Activated naive CD4-positive, alpha-beta T cell treated with anti-CD3 and anti-CD28 coated beads for 36 hours (primary cell): ENCODE measurements at regions of chr5 and their contacts with region 1.

Region 1: DNA sequence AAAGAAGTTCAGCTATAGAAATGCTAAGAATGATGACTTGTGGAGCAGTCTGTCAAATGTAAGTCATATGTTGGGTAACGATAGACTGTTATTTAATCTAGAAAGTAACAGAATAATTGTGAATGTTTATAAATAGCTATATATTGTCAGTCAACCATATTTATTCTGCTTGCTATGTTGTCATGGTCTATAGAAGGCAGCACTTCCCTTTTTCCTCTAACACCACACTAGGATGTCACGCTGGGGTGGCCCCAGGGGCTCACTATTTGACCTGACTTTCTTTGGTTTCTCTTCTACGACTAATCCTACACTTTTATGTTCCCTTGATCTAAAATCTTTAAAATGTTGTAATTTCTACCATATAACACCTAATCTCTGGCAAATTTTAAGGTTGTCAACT is 20.5 kb downstream of the ERAP2 start:
- DNase-seq: peak; percentile 79
- H3K4me3 Mint-ChIP-seq: peak overlapping the region; percentile 79
- H3K27ac Mint-ChIP-seq: peak overlapping the region; percentile 98
- H3K4me1 Mint-ChIP-seq: peaks cover 62% of the 10 kb centered on the region
- H3K27me3 Mint-ChIP-seq: no peaks in the 10 kb centered on the region

Region 2: DNA sequence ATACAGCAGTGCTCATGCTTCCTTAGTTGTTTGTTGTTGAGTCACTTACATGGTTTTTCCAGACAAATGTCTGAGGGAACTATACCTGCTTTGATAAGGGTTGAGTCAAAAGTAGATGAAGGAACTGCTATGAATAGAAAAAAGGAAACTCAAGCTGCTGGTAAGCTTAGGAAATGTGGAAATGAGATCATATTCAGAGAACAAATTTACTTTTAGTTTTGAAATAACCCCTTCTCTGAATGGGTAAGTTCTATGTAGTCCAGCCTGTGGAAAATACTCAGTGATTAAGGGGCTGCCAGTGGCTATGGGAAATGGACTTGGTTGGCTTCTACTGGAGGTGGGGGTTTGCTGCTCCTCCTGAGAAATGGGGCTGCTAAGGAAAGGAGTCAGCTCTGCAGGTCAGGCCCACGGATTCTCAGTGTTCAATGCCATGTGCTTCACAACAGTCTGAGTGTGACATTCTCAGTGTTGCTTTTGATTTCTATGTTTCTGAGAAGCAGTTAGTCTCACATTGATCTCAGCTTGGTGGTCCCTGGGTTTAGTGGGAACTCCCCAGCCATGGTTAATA is 1026.6 kb before region 1 on chr5:
- CTCF ChIA-PET with region 1: no interaction called
- intact Hi-C with region 1: loop called (anchors 1 kb)
- DNase-seq: peak; percentile 65
- H3K4me3 Mint-ChIP-seq: peak overlapping the region; percentile 68
- H3K27ac Mint-ChIP-seq: peak overlapping the region; percentile 99
- H3K4me1 Mint-ChIP-seq: peaks cover 59% of the 10 kb centered on the region
- H3K27me3 Mint-ChIP-seq: no peaks in the 10 kb centered on the region

Region 3: GRCh38 chr5:96807075-96807654 is 89.6 kb before region 1 on chr5:
- CTCF ChIA-PET with region 1: interaction called, 3 read pairs
- intact Hi-C with region 1: loop called (anchors 1 kb)
- DNase-seq: peak; percentile 48
- H3K4me3 Mint-ChIP-seq: peak overlapping the region; percentile 86
- H3K27ac Mint-ChIP-seq: peak overlapping the region; percentile 97
- H3K4me1 Mint-ChIP-seq: peaks cover 80% of the 10 kb centered on the region
- H3K27me3 Mint-ChIP-seq: no peaks in the 10 kb centered on the region

Region 4: DNA sequence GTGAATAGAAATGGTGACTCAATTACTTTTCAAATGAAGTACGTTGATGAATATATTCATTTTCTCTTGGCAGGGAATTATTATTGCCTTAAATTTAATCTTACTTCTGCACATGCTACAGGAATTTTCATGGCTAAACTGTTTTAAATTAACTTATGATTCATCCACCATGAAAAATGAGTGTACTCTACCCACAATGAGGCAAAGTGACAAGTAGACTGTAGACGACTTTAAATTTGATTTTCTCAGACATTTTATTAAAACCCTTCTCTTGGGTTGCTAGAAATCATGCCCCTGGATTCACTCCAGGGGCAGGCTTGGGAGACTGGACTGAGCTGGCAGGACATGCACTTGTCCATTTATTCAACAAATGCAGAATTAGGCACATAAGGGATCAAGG is 44.0 kb before region 1 on chr5:
- CTCF ChIA-PET with region 1: no interaction called
- intact Hi-C with region 1: no loop called
- DNase-seq: no peak
- H3K4me3 Mint-ChIP-seq: no peak overlapping the region
- H3K27ac Mint-ChIP-seq: no peak overlapping the region
- H3K4me1 Mint-ChIP-seq: no peaks in the 10 kb centered on the region
- H3K27me3 Mint-ChIP-seq: no peaks in the 10 kb centered on the region

Region 5: GRCh38 chr5:96876292-96876850 is 20.4 kb before region 1 on chr5 and contains the start of gene ERAP2:
- CTCF ChIA-PET with region 1: interaction called, 7 read pairs
- intact Hi-C with region 1: loop called (anchors 1 kb)
- DNase-seq: no peak
- H3K4me3 Mint-ChIP-seq: peak within 1 kb of the TSS; percentile 90
- H3K27ac Mint-ChIP-seq: peak within 1 kb of the TSS; percentile 95
- H3K4me1 Mint-ChIP-seq: peaks cover 68% of the 10 kb centered on the region
- H3K27me3 Mint-ChIP-seq: no peaks in the 10 kb centered on the region
- total RNA-seq, gene ERAP2: 108 to 111 TPM

Region 6: DNA sequence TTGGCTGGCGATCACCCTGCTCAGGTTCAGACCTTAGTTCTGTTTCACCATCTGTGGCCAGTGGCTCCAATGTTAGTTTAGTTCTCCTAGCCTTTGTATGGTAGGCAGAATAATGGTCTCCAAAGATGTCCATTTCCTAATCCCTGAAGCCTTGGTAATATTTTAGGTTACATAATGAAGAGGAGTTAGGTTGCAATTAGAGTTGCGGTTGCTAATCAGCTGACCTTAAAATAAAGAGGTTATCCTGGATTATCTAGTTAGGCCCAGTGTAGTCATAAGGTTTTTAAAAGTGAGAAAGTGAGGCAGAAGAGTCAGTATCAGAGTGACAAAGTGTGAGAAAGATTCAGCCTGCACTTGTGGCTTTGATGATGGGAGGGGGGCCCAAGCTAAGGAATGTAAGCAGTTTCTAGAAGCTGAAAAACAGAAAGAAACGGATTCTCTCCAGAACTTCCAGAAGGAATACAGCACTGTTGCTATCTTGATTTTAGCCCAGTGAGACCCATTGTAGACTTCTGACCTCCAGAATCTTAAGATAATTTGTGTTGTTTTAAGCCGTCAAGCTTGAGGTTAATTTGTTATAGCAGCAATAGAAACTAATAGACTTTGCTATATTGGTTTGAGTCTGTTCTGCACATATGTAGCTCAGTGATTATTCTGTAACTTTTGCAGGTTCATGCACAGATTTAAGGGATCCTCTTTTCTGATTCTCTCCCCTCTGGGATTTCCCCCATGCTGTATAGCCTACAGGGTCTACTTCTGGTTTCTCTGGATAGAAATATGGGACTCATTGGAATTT is 60.6 kb after region 1 on chr5:
- CTCF ChIA-PET with region 1: interaction called, 3 read pairs
- intact Hi-C with region 1: loop called (anchors 1 kb)
- DNase-seq: peak; percentile 73
- H3K4me3 Mint-ChIP-seq: peak overlapping the region; percentile 64
- H3K27ac Mint-ChIP-seq: peak overlapping the region; percentile 86
- H3K4me1 Mint-ChIP-seq: peaks cover 77% of the 10 kb centered on the region
- H3K27me3 Mint-ChIP-seq: no peaks in the 10 kb centered on the region

Region 7: GRCh38 chr5:97094579-97095317 is 197.9 kb after region 1 on chr5:
- CTCF ChIA-PET with region 1: no interaction called
- intact Hi-C with region 1: loop called (anchors 1 kb)
- DNase-seq: peak; percentile 68
- H3K4me3 Mint-ChIP-seq: no peak overlapping the region
- H3K27ac Mint-ChIP-seq: no peak overlapping the region
- H3K4me1 Mint-ChIP-seq: peaks cover 16% of the 10 kb centered on the region
- H3K27me3 Mint-ChIP-seq: peaks cover 6% of the 10 kb centered on the region